ENCODE measurements at regions of chr1 and their contacts with region 1.

Region 1: DNA sequence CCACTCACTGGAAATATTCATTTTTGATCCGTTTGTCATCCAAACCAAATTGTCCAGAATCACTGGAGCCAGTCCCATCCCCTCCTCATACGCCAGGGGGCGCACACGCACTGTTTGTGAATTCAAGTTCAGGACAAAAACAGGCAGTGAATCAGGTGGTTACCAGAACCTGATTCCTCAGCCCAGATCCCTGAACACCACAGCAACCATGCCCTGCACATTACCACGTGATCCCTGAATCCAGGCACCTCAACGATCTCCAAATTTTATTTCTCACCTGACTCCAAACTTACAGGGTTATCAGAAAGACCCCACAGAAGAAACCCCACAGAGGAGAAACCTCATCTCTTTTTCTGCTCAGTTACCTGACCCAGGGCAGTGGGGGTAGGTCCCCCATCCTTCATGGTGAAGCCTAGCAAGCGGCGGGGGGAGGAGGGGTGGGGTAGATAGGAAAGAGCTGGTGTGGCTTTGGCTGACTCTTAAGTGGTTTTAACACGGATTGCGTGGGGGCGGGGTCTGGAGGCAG is 1.4 kb upstream of the PTPRF start:
- DNase-seq: peak; percentile 70 to 76 (median 73)
- H3K4me3 ChIP-seq: no peak overlapping the region
- H3K4me3 Mint-ChIP-seq: peak overlapping the region in 7 of 8 donors; percentile 19 to 84 (median 51)
- H3K27ac ChIP-seq: no peak overlapping the region
- H3K27ac Mint-ChIP-seq: peak overlapping the region in 1 of 7 donors; percentile 74
- H3K4me1 ChIP-seq: peaks cover 21% of the 10 kb centered on the region
- H3K4me1 Mint-ChIP-seq: peaks cover 15 to 31% (median 19%) of the 10 kb centered on the region in 4 donors
- H3K27me3 ChIP-seq: peaks cover 13% of the 10 kb centered on the region
- H3K27me3 Mint-ChIP-seq: peaks cover 39 to 63% of the 10 kb centered on the region in 2 donors

Region 2: GRCh38 chr1:43227143-43227764 is 302.0 kb before region 1 on chr1:
- CTCF ChIA-PET with region 1: no interaction called
- POLR2A ChIA-PET with region 1: no interaction called
- intact Hi-C with region 1: loop called (anchors 1 kb)
- DNase-seq: peak; percentile 68 to 75 (median 72)
- H3K4me3 ChIP-seq: no peak overlapping the region
- H3K4me3 Mint-ChIP-seq: no peak overlapping the region
- H3K27ac ChIP-seq: no peak overlapping the region
- H3K27ac Mint-ChIP-seq: peak overlapping the region in 2 of 7 donors; percentile 18 to 53
- H3K4me1 ChIP-seq: no peaks in the 10 kb centered on the region
- H3K4me1 Mint-ChIP-seq: no peaks in the 10 kb centered on the region
- H3K27me3 ChIP-seq: no peaks in the 10 kb centered on the region
- H3K27me3 Mint-ChIP-seq: peaks cover 0 to 9% of the 10 kb centered on the region in 2 donors

Region 3: DNA sequence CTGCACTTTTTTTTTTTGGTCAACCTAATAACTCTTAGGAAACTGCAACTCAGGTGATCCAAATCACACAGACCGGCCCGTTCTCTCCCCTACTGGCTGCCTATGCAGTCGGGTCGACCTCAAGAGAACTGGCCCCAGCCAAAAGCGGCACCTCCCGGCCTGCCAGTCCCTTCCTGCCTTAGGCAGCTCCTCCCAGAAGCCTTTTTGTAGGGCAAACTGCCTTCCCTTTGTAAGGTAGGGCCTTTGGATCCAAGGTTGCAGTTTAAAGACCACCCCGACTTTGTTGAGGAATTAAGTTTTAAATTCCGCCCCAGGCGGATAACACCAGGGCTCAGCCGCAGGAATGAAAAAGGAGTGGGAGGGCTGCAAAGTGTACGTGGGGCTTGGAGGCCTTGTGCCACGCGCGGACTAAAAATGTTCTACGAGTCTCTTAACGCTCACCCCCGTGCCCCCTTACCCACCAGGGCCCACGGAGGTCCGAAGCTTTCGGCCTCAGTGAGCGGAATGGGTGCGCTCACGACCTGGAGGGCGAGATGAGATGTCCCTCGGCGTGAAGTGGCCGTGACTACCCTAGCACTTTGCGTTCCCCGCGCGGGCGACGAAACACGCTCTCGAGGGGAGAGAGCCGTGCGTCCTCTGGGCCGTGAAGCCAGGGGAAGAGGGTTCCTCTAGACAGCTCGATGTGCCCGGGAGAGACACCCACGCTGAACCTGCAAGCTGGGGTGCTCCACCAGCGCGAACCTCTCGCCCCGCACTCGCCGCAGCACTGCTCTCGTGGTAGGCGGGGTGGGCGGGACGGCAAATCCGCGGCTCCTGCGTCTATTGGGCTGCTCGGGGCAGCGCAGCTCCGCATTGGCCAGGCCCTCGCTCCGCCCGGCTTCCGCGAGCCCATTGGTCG is 177.6 kb after region 1 on chr1:
- CTCF ChIA-PET with region 1: no interaction called
- POLR2A ChIA-PET with region 1: no interaction called
- intact Hi-C with region 1: loop called (anchors 2 kb)
- DNase-seq: peak; percentile 87 to 91 (median 89)
- H3K4me3 ChIP-seq: peak overlapping the region; percentile 24 to 79
- H3K4me3 Mint-ChIP-seq: peak overlapping the region; percentile 85 to 94 (median 90)
- H3K27ac ChIP-seq: peak overlapping the region; percentile 55
- H3K27ac Mint-ChIP-seq: peak overlapping the region; percentile 38 to 79 (median 77)
- H3K4me1 ChIP-seq: peaks cover 16% of the 10 kb centered on the region
- H3K4me1 Mint-ChIP-seq: peaks cover 13 to 32% (median 24%) of the 10 kb centered on the region in 4 donors
- H3K27me3 ChIP-seq: no peaks in the 10 kb centered on the region
- H3K27me3 Mint-ChIP-seq: no peaks in the 10 kb centered on the region

Region 4: DNA sequence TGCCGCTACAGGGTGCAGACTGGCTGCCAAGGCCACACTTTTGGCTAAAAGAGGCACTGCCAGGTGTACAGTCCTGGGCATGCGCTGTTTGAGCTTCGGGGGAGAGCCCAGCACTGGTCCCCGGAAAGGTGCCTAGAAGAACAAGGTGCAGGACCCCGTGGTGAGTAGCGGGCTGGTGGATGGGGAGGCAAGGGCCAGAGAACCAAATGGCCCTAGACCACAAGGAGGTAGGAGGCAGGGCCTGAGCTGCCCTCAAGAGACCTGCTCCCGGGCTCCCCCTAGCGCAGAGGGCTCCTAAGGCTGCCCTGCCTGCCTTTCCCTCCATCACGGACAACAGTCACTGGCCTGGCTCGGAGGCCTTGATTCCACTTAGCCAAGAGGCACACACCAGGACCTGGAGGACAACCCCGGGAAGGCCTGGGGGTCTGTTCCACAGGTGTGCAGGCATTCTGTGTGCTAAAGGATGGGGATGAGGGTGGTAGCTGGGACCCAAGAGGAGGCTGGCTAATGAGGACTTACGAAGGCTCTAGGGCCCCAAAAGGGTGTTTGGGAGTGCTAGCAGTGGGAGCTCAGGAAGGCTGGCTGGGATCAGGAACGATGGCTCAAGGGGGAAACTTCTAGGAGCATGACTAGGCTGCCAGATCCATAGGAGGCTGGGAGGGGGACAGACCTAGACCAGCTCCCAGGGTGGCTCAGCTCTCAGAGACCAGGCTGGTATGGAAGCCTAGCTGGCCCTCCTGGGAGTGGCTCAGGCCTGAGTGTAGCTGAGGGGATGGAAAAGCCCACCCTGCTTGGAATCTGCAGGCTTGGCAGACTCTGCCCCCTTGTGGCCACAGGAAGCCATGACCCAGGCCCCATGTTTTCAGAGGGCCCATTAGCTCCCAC is 405.1 kb after region 1 on chr1:
- CTCF ChIA-PET with region 1: interaction called, 21 read pairs
- POLR2A ChIA-PET with region 1: interaction called, 3 read pairs
- intact Hi-C with region 1: no loop called
- DNase-seq: peak in 4 of 5 donors; percentile 23 to 35 (median 32)
- H3K4me3 ChIP-seq: no peak overlapping the region
- H3K4me3 Mint-ChIP-seq: peak overlapping the region in 4 of 8 donors; percentile 0 to 56 (median 34)
- H3K27ac ChIP-seq: no peak overlapping the region
- H3K27ac Mint-ChIP-seq: peak overlapping the region in 2 of 7 donors; percentile 43 to 56
- H3K4me1 ChIP-seq: peaks cover 8% of the 10 kb centered on the region
- H3K4me1 Mint-ChIP-seq: peaks cover 3 to 25% (median 4%) of the 10 kb centered on the region in 4 donors
- H3K27me3 ChIP-seq: peaks cover 23% of the 10 kb centered on the region
- H3K27me3 Mint-ChIP-seq: peaks cover 16 to 21% of the 10 kb centered on the region in 2 donors

Region 5: DNA sequence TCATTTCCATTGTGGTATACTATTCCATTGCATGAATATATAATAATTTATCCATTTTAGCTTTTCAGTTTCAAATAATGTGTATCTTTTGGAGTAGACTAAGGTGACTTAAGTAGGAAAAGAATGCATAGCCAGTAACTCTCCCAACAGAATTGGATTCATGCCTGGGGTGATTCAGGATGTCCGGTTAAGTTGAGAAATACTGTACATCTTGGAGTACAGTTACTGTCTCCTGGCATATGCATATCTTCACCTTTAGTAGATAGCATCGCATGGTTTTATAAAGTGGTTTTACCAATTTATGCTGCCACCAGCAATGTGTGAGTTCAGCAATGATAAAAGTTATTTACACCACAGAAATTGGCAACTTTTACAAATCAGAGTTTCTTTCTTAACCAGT is 520.6 kb after region 1 on chr1:
- CTCF ChIA-PET with region 1: interaction called, 19 read pairs
- POLR2A ChIA-PET with region 1: no interaction called
- intact Hi-C with region 1: loop called (anchors 1 kb)
- DNase-seq: no peak
- H3K4me3 ChIP-seq: no peak overlapping the region
- H3K4me3 Mint-ChIP-seq: no peak overlapping the region
- H3K27ac ChIP-seq: no peak overlapping the region
- H3K27ac Mint-ChIP-seq: no peak overlapping the region
- H3K4me1 ChIP-seq: no peaks in the 10 kb centered on the region
- H3K4me1 Mint-ChIP-seq: peaks cover 0 to 5% (median 3%) of the 10 kb centered on the region in 4 donors
- H3K27me3 ChIP-seq: no peaks in the 10 kb centered on the region
- H3K27me3 Mint-ChIP-seq: peaks cover 12 to 13% of the 10 kb centered on the region in 2 donors

Measured in CD4-positive, alpha-beta memory T cell (primary cell).